Right ventricle myocardium inferior (tissue), 1 donor: ENCODE measurements at regions of chr1 and their contacts with region 1.

Region 1: DNA sequence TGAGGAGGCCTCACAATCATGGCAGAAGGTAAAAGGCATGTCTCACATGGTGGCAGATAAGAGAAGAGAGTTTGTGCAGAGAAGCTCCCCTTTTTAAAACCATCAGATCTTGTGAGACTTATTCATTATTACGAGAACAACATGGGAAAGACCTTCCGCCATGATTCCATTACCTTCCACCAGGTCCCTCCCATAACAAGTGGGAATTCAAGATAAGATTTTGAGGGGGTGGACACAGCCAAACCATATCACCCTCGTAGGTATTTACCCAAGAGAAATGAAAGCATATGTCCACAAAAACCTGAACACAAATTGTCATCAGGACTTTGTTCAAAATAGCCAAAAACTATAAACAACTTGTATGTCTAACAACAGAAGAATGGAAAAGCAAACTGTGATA is 45.9 kb upstream of the TENT5C start:
- DNase-seq: no peak
- ATAC-seq: no peak

Region 2: DNA sequence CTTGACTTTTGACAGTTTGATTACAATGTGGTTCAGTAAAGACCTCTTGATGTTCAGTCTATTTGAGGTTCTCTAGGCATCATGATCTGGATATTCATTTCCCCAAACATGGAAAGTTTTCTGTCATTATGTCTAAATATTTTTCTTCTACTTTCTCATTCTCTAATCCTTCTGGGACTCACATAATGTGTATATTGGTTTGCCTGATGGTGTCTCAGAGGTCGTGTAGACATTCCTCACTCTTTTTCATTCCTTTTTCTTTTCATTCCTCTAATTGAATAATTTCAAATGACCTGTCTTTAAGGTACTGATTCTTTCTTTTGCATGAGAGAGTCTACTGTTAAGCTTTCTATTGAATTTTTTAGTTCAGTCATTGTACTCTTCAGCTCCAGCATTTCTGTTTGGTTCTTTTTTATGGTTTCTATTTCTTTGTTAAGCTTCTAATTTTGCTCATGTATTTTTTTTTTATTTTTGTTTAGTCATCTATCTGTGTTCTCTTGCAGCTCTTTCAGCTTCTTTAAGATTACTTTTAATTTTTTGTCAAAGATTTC is 211.1 kb after region 1 on chr1:
- intact Hi-C with region 1: loop called (anchors 1 kb)
- DNase-seq: no peak
- ATAC-seq: no peak